Calu3 (cell line): ENCODE measurements at regions of chr20 and their contacts with region 1.

Region 1: GRCh38 chr20:53915446-53916172 is 154.8 kb downstream of the BCAS1 start:
- DNase-seq: peak; percentile 99
- H3K4me3 Mint-ChIP-seq: peak overlapping the region; percentile 71
- H3K27ac Mint-ChIP-seq: peak overlapping the region; percentile 90
- H3K4me1 Mint-ChIP-seq: peaks cover 50% of the 10 kb centered on the region
- H3K27me3 Mint-ChIP-seq: no peaks in the 10 kb centered on the region
- CTCF ChIP-seq: peak; percentile 91

Region 2: DNA sequence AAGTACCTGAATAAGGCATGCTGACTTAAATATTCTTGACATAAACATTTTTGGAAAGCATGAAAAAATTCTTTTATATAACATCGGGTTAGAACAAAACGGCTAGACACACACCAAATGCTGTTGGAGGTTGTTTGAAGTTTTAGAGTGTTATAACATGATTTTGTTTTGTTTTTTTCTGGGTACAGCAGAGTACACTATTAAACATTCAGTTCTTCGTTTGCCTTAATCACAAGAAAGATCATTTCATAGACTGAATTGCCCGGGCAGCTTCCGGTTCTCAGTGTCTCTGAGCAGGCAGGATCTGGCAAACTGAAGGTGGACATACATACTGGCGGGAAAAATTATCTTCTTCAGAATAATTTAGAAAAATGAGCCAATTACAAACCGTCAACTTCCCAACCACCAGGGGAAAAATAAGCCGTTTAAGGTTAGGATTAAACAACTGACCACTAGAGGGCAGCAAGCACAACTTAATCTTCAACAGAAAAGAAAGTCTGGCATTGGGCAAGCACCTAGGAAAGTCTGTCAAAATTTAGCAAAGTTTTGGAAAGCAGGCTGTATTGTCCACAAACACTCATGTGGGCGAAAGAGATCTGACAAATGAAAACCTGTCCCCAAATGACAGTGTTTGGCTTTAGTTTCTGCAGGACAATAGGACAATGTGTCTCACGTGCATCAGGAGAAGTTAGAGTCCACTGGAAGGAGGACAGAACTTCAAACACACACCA is 337.0 kb before region 1 on chr20:
- CTCF ChIA-PET with region 1: interaction called, 10 read pairs
- intact Hi-C with region 1: loop called (anchors 1 kb)
- DNase-seq: peak; percentile 81
- H3K4me3 Mint-ChIP-seq: peak overlapping the region; percentile 63
- H3K27ac Mint-ChIP-seq: peak overlapping the region; percentile 80
- H3K4me1 Mint-ChIP-seq: peaks cover 60% of the 10 kb centered on the region
- H3K27me3 Mint-ChIP-seq: no peaks in the 10 kb centered on the region
- CTCF ChIP-seq: peak; percentile 95

Region 3: GRCh38 chr20:53643031-53643832 is 272.4 kb before region 1 on chr20:
- CTCF ChIA-PET with region 1: no interaction called
- intact Hi-C with region 1: loop called (anchors 2 kb)
- DNase-seq: peak; percentile 75
- H3K4me3 Mint-ChIP-seq: peak overlapping the region; percentile 50
- H3K27ac Mint-ChIP-seq: peak overlapping the region; percentile 89
- H3K4me1 Mint-ChIP-seq: peaks cover 9% of the 10 kb centered on the region
- H3K27me3 Mint-ChIP-seq: no peaks in the 10 kb centered on the region
- CTCF ChIP-seq: no peak

Region 4: DNA sequence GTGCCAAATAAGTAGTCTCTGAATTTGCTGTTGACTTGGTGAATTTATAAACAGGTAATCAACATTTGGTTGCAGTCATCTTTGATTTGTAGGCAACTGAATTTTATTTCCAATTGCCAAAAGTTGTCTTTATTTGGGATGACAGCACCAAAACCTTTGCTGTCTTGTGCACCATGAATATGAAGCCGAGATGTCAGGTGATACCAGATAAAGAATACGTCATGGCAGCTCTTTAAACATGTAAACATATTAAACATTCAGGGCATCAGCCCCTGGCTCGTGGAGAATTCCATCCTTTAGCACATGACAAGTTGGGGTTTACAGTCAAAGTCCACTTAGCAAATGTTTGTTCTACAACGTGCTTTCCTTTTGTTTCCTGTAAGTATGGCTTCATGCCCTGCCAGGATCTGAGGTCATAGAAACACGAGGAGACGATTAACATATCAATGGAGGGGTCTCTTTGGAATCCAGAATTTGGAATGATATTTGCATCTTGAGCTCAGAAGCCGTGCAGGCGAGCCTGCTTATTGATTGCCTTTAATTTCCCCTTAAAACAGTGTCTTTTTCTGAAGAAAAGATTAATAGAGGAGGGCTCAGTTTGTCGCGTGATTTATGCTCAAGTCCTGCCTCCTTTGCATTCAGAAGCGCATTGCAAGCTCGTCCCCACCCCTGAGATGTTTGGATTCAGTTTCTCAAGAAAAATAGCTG is 151.7 kb before region 1 on chr20:
- CTCF ChIA-PET with region 1: interaction called, 10 read pairs
- intact Hi-C with region 1: no loop called
- DNase-seq: peak; percentile 54
- H3K4me3 Mint-ChIP-seq: peak overlapping the region; percentile 51
- H3K27ac Mint-ChIP-seq: peak overlapping the region; percentile 50
- H3K4me1 Mint-ChIP-seq: peaks cover 26% of the 10 kb centered on the region
- H3K27me3 Mint-ChIP-seq: no peaks in the 10 kb centered on the region
- CTCF ChIP-seq: no peak

Region 5: DNA sequence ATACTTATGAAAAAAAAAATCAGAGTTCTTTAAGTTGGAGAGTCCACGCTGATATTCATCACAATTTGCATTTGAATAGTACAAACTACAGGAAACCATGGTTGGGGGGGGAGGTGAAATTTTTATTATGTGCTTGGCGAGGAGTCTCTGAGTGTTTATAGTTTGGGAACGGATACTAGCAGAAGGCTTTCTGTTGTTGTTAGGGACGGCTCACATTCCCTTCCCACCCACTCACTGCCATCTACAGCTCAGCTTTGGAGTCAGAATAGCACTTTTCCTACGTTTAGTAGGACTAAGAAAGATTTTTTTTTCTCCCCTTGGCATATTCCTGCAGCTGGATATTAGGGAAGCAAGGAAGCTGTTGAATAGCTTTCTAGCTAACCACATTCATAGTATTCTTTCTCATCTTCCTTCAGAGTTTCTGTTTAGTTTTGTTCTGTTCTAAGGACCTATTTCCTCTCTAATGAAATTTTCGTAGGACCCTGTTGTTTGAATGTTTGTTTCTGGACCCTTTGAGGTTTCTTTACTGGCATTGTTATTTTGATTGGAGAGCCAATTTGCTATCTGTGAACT is 86.8 kb before region 1 on chr20:
- CTCF ChIA-PET with region 1: interaction called, 9 read pairs
- intact Hi-C with region 1: loop called (anchors 2 kb)
- DNase-seq: peak; percentile 27
- H3K4me3 Mint-ChIP-seq: peak overlapping the region; percentile 64
- H3K27ac Mint-ChIP-seq: peak overlapping the region; percentile 98
- H3K4me1 Mint-ChIP-seq: peaks cover 55% of the 10 kb centered on the region
- H3K27me3 Mint-ChIP-seq: no peaks in the 10 kb centered on the region
- CTCF ChIP-seq: no peak

Region 6: DNA sequence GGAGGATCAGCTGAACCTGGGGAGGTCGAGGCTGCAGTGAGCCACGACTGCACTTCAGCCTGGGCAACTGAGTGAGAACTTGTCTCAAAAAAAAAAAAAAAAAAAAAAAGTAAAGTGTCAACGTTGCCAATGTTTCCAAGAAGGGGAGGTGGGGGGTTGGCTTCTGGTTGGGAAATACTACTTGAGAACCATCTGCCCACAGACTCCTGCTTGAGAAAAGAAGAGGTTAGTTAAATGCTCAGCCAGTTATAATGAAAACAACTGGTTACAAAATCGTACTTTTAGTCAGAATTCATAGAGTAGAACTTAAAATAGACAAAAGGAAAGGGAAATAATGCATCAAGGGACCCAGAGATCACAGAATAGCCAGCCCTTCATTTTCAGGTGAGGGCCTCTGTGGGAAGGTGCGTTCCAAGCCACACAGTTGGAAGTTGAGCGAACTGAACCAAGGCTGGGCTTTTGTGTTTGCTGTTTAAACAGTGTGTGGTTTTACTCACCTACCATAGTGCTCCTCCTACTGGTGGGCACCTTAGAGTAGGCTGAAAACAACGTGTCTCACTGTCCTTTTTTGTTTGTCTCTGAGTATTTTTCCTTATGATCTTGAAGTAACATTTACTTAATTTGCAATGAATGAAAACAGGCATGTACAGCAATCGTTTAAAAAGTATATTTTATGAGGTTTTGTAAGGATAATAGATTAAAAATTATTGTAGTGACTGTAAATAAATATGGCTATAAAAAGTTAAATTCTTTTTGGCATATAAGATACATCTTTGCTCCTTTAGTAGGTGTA is 45.9 kb before region 1 on chr20:
- CTCF ChIA-PET with region 1: interaction called, 33 read pairs
- intact Hi-C with region 1: loop called (anchors 1 kb)
- DNase-seq: peak; percentile 90
- H3K4me3 Mint-ChIP-seq: no peak overlapping the region
- H3K27ac Mint-ChIP-seq: peak overlapping the region; percentile 80
- H3K4me1 Mint-ChIP-seq: peaks cover 76% of the 10 kb centered on the region
- H3K27me3 Mint-ChIP-seq: no peaks in the 10 kb centered on the region
- CTCF ChIP-seq: peak; percentile 77

Region 7: DNA sequence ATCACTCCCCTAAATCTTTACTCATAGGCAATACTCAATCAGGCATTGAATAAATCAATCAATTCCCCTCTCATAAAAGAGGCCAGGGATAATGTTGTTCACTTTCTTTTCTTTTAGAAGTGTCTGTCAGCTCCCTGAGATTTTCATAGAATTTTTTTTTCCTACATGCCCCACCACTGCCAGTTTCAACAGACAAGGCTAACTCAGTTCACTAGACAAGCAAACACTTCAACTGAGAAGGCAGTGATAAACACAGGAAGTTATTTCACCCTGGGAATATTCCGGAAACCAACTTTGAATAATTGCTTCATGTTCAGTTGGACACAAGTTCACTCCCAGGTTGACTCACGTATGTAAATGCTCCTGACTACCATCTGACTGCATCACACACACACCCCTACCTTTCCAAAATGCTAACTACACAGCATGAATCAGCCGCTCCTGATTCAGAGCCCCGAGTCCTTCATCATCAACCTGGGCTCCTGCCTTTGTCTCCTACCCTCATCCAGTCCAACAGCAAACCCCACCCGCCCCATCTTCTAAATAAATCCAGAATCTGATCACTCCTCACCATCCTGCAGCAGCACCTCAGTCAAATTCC is 10.9 kb after region 1 on chr20:
- CTCF ChIA-PET with region 1: interaction called, 17 read pairs
- intact Hi-C with region 1: no loop called
- DNase-seq: peak; percentile 82
- H3K4me3 Mint-ChIP-seq: peak overlapping the region; percentile 31
- H3K27ac Mint-ChIP-seq: peak overlapping the region; percentile 70
- H3K4me1 Mint-ChIP-seq: peaks cover 67% of the 10 kb centered on the region
- H3K27me3 Mint-ChIP-seq: no peaks in the 10 kb centered on the region
- CTCF ChIP-seq: no peak

Region 8: DNA sequence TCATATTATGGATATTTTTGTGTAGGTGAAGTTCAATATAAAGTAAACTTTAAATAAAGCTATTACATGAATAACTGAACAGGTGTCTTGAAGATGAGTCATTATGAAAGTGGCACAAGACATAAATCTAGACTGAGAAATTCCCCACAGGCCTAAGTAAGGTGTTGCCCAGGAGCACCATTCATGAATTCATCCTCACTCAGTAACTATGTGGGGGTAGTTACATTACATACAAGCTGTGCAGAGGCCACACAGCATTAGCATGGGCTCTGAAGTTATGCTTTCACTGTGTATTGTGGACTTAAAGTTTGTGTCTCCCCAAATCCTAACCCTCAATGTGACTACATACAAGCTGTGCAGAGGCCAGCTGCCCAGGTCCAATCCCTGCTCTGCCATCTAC is 88.8 kb after region 1 on chr20:
- CTCF ChIA-PET with region 1: no interaction called
- intact Hi-C with region 1: no loop called
- DNase-seq: no peak
- H3K4me3 Mint-ChIP-seq: no peak overlapping the region
- H3K27ac Mint-ChIP-seq: no peak overlapping the region
- H3K4me1 Mint-ChIP-seq: no peaks in the 10 kb centered on the region
- H3K27me3 Mint-ChIP-seq: peaks cover 31% of the 10 kb centered on the region
- CTCF ChIP-seq: no peak